Activated B cell treated with CpG ODN at 0.5 μM for 24 hours (primary cell): ENCODE measurements at regions of chr1 and their contacts with region 1.

Region 1: DNA sequence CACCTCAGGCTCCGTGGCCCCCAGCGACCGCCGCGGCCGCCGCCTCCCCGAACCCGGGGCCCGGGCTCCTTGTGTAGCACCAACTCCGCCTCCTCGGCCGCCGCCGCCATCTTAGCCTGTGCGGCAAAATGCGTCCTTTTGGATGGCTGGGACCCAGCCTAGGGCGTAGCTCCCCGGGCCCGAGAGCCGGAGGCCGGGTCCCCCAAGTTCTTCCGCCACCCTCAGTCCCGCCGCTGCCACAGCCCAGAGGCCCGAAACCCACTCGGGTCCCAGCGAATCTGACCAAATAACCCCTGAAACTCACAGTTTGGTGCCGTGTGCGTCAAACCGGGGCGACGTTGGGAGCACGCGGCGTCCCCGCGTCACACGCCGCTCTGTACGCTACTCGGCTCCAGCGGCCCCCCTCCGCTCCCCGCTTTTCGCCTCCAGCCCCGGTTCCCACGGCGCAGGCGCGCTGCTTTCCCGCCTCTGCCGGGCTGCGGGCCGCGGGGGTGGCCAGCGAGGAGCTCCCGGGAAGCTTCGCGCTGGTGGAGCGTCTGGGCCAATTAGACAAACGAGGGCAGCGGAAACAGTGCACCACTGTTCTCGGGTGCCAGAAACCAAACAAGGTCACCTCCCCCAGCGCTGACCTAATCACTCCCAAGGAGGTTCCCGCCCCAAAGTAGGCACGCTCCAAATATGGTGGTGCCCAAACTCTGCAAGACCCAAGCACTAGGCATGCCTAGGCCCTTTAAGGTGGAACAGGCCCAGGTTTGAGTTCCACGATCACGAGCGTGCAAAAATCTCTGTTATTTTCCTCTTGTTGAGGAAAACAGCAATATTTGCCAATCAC is at the start of gene ZNF644:
- DNase-seq: peak; percentile 80
- ATAC-seq: peak; percentile 81
- H3K4me3 Mint-ChIP-seq: peak within 1 kb of the TSS; percentile 95
- H3K27ac Mint-ChIP-seq: peak within 1 kb of the TSS; percentile 99
- H3K4me1 Mint-ChIP-seq: peaks cover 83% of the 10 kb centered on the region
- H3K27me3 Mint-ChIP-seq: no peaks in the 10 kb centered on the region
- CTCF ChIP-seq: no peak
- total RNA-seq, gene ZNF644: 78.4 and 98.4 TPM in 2 replicates

Region 2: GRCh38 chr1:90729504-90730242 is 292.2 kb before region 1 on chr1:
- CTCF ChIA-PET with region 1: no interaction called
- POLR2A ChIA-PET with region 1: no interaction called
- intact Hi-C with region 1: no loop called
- DNase-seq: no peak
- ATAC-seq: no peak
- H3K4me3 Mint-ChIP-seq: peak overlapping the region; percentile 41
- H3K27ac Mint-ChIP-seq: no peak overlapping the region
- H3K4me1 Mint-ChIP-seq: peaks cover 39% of the 10 kb centered on the region
- H3K27me3 Mint-ChIP-seq: peaks cover 73% of the 10 kb centered on the region
- CTCF ChIP-seq: no peak

Region 3: GRCh38 chr1:90850898-90851710 is 170.8 kb before region 1 on chr1:
- CTCF ChIA-PET with region 1: no interaction called
- POLR2A ChIA-PET with region 1: interaction called, 3 read pairs
- intact Hi-C with region 1: loop called (anchors 2 kb)
- DNase-seq: peak; percentile 66
- ATAC-seq: peak; percentile 99
- H3K4me3 Mint-ChIP-seq: peak overlapping the region; percentile 84
- H3K27ac Mint-ChIP-seq: no peak overlapping the region
- H3K4me1 Mint-ChIP-seq: peaks cover 14% of the 10 kb centered on the region
- H3K27me3 Mint-ChIP-seq: peaks cover 32% of the 10 kb centered on the region
- CTCF ChIP-seq: no peak

Region 4: DNA sequence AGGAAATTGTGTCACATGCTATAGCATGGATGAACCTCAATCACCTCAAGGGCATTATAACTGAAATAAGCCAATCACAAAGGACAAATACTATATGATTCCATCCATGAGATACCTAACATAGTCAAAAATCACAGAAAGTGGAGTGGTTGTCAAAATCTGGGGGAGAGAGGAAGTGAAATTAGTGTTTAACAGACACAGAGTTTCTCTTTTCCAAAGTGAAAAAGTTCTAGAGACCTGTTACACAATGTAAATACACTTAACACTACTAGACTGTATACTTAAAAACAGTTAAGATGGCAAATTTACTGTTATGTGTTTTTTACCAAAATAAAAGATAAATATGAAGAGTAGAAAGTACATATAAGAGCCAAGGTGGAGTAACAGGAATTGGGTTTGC is 31.9 kb before region 1 on chr1:
- CTCF ChIA-PET with region 1: no interaction called
- POLR2A ChIA-PET with region 1: interaction called, 6 read pairs
- intact Hi-C with region 1: loop called (anchors 5 kb)
- DNase-seq: no peak
- ATAC-seq: peak; percentile 34
- H3K4me3 Mint-ChIP-seq: no peak overlapping the region
- H3K27ac Mint-ChIP-seq: peak overlapping the region; percentile 73
- H3K4me1 Mint-ChIP-seq: peaks cover 92% of the 10 kb centered on the region
- H3K27me3 Mint-ChIP-seq: no peaks in the 10 kb centered on the region
- CTCF ChIP-seq: no peak

Region 5: DNA sequence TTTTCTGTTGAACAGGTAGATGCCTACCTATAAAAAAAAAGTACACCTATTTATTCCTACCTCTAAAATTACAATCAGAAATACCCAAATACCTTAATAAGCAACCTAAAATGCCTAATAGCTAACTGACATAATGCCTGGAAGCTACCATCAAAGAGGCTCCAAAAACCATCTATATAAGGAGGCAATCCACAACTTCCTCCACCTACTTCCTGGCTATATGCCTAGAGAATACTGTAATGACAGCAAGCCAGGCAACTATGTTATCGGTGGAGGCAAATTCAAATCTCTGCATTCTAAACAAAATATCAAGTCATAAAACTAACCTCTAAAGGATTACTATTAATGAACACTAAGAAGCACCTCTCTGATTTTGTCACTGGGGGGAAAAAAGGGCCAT is 10.2 kb before region 1 on chr1:
- CTCF ChIA-PET with region 1: interaction called, 4 read pairs
- POLR2A ChIA-PET with region 1: interaction called, 17 read pairs
- intact Hi-C with region 1: no loop called
- DNase-seq: no peak
- ATAC-seq: no peak
- H3K4me3 Mint-ChIP-seq: no peak overlapping the region
- H3K27ac Mint-ChIP-seq: no peak overlapping the region
- H3K4me1 Mint-ChIP-seq: peaks cover 76% of the 10 kb centered on the region
- H3K27me3 Mint-ChIP-seq: no peaks in the 10 kb centered on the region
- CTCF ChIP-seq: no peak

Region 6: DNA sequence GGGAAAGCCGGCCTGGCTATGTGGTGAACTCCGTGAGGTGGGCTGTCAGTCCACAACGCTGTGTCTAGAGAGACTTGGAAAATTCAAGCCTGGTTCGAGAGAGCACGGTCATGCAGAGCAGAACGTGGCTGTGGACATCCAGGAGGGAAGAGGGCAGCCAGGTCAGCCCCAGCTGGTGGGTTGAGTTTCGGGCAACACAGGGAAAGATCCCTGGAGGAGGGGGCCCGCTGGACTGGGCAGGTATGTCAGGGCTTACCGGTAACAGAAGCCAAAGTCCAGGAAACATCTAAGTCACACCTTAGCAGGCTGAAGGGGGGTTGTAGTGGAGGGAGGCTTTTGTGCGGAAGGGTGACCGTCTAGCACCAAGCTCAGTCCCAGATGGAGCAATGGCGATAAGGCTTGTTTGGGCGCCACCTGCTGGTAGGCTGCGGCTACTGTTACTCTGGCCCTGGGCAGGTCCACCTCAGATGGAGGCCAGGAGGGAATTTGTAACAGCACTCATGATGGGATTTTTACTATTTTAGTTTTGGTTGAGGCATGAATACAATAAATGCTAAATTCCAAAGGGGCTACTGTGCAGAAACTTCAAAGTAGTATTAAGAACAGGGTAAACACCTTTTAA is 143.2 kb after region 1 on chr1:
- CTCF ChIA-PET with region 1: interaction called, 60 read pairs
- POLR2A ChIA-PET with region 1: interaction called, 3 read pairs
- intact Hi-C with region 1: loop called (anchors 1 kb)
- DNase-seq: peak; percentile 59
- ATAC-seq: peak; percentile 93
- H3K4me3 Mint-ChIP-seq: no peak overlapping the region
- H3K27ac Mint-ChIP-seq: no peak overlapping the region
- H3K4me1 Mint-ChIP-seq: no peaks in the 10 kb centered on the region
- H3K27me3 Mint-ChIP-seq: peaks cover 2% of the 10 kb centered on the region
- CTCF ChIP-seq: peak; percentile 57

Region 7: GRCh38 chr1:91500756-91501522 is 479.0 kb after region 1 on chr1 and contains the start of gene CDC7:
- CTCF ChIA-PET with region 1: no interaction called
- POLR2A ChIA-PET with region 1: no interaction called
- intact Hi-C with region 1: loop called (anchors 5 kb)
- DNase-seq: peak; percentile 83
- ATAC-seq: peak; percentile 88
- H3K4me3 Mint-ChIP-seq: no peak within 1 kb of the TSS
- H3K27ac Mint-ChIP-seq: no peak within 1 kb of the TSS
- H3K4me1 Mint-ChIP-seq: peaks cover 16% of the 10 kb centered on the region
- H3K27me3 Mint-ChIP-seq: no peaks in the 10 kb centered on the region
- CTCF ChIP-seq: no peak
- total RNA-seq, gene CDC7: 5.8 and 7.3 TPM in 2 replicates